Activated CD8-positive, alpha-beta memory T cell treated with anti-CD3 and anti-CD28 coated beads, Interleukin-2, amount 10 ng/mL, durations not matched to agents 7 days and 5 days (primary cell): ENCODE measurements at regions of chr2 and their contacts with region 1.

Region 1: DNA sequence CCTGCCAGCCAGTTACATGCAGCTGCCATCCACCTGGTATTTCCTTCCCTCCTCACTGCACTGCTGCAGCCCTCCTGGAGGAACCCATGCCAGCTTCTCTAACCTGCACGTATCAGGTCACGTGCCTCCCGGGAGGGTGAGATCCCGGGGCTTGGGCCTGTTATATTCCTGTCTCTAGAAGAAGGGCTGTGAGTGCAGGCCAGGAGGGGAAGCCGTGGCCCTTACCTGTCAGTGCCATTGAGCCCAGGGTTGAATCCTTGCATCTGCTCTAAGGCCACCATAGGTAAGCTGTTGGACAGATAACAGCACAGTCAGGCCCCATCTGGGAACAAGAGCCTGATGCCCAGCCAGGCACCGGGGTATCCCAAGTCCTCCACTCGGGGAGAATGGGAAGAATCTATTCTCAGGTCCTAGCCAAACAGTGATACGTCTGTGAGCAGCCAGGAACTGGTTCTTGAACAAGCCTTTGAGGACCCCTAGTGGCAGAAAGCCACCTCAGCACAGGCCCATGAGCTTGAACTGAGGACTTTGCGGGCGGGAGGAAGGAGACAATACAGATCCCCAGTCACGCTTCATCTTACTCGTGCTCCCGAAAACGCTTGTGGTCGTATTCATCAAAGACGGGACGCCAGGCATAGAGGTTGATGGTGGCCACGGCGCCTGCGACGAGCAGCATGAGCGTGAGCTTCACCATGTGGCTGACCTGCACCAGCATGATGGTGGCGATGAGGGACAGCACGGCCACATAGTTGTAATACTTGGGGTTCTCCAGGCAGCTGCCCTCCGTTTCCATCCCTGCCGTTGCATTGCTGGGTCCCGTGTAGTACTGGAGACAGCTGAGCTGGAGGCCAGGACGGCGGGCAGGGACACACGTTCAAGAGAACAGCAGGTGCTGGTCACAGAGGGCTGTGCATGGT is 34.4 kb downstream of the CENPO start:
- DNase-seq: peak; percentile 84
- ATAC-seq: peak; percentile 86
- H3K4me3 Mint-ChIP-seq: no peak overlapping the region
- H3K27ac Mint-ChIP-seq: peak overlapping the region; percentile 47
- H3K4me1 Mint-ChIP-seq: peaks cover 19% of the 10 kb centered on the region
- H3K27me3 Mint-ChIP-seq: no peaks in the 10 kb centered on the region

Region 2: DNA sequence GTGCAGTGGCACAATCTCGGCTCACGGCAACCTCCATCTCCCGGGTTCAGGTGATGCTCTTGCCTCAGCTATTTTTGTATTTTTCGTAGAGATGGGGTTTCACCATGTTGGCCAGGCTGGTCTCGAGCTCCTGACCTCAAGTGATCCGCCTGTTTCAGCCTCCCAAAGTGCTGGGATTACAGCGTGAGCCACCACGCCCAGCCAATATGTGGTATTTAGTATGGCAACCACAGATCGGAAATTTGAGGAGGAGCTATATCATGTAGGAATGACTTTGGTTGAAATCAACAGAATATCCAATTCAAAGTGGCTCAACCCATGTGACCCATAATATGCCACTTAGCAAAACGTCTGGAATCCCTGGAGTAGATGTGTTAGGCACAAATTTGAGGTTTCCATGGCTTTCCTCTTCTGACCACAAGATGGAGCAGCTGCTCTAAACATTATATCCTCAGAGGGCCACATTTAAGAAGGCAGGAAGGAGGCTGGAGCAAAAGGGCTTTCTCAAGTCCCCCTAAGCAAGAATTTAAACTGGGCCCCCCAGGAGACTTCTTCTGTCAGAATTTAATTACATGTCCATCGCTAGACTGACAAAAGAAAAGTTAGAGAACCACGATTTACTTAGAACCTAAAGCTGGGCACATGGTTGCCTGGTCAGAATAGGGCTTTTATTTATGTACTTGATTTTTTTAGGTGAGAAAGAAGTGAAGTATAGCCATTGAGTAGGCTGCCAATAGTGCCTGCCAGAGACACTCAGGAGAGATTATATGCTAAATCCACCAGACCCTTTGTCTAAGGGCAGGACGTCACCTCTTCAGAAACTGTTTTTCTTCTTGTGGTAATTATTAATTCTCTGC is 417.7 kb before region 1 on chr2:
- CTCF ChIA-PET with region 1: interaction called, 70 read pairs
- DNase-seq: peak; percentile 52
- ATAC-seq: peak; percentile 70
- H3K4me3 Mint-ChIP-seq: no peak overlapping the region
- H3K27ac Mint-ChIP-seq: no peak overlapping the region
- H3K4me1 Mint-ChIP-seq: peaks cover 3% of the 10 kb centered on the region
- H3K27me3 Mint-ChIP-seq: peaks cover 4% of the 10 kb centered on the region

Region 3: DNA sequence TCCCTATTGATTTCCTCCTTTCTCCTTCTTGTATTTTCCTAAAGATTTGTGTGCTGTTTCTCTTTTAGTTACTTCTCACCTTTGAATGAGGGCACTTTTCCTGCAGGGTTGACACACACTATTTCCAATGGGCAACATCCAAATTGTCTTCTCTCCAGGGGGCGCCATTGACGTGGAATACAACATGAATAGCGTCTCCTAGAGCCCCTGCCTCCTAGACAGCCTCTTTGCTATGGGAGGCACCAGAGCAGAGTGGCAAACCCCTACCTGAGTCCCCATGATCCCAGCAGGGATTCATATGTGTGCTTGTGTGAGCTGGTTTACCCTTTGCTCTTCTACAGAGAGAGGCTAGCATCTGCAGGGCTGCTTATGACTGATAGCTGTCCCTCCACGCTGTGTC is 405.9 kb before region 1 on chr2:
- CTCF ChIA-PET with region 1: interaction called, 32 read pairs
- DNase-seq: peak; percentile 68
- ATAC-seq: peak; percentile 42
- H3K4me3 Mint-ChIP-seq: no peak overlapping the region
- H3K27ac Mint-ChIP-seq: no peak overlapping the region
- H3K4me1 Mint-ChIP-seq: peaks cover 2% of the 10 kb centered on the region
- H3K27me3 Mint-ChIP-seq: peaks cover 3% of the 10 kb centered on the region

Region 4: GRCh38 chr2:24613154-24613814 is 214.3 kb before region 1 on chr2:
- CTCF ChIA-PET with region 1: interaction called, 18 read pairs
- DNase-seq: peak; percentile 70
- ATAC-seq: peak; percentile 97
- H3K4me3 Mint-ChIP-seq: no peak overlapping the region
- H3K27ac Mint-ChIP-seq: peak overlapping the region; percentile 85
- H3K4me1 Mint-ChIP-seq: peaks cover 13% of the 10 kb centered on the region
- H3K27me3 Mint-ChIP-seq: no peaks in the 10 kb centered on the region

Region 5: GRCh38 chr2:24711865-24712264 is 115.7 kb before region 1 on chr2:
- CTCF ChIA-PET with region 1: no interaction called
- DNase-seq: no peak
- ATAC-seq: no peak
- H3K4me3 Mint-ChIP-seq: no peak overlapping the region
- H3K27ac Mint-ChIP-seq: no peak overlapping the region
- H3K4me1 Mint-ChIP-seq: peaks cover 2% of the 10 kb centered on the region
- H3K27me3 Mint-ChIP-seq: no peaks in the 10 kb centered on the region

Region 6: DNA sequence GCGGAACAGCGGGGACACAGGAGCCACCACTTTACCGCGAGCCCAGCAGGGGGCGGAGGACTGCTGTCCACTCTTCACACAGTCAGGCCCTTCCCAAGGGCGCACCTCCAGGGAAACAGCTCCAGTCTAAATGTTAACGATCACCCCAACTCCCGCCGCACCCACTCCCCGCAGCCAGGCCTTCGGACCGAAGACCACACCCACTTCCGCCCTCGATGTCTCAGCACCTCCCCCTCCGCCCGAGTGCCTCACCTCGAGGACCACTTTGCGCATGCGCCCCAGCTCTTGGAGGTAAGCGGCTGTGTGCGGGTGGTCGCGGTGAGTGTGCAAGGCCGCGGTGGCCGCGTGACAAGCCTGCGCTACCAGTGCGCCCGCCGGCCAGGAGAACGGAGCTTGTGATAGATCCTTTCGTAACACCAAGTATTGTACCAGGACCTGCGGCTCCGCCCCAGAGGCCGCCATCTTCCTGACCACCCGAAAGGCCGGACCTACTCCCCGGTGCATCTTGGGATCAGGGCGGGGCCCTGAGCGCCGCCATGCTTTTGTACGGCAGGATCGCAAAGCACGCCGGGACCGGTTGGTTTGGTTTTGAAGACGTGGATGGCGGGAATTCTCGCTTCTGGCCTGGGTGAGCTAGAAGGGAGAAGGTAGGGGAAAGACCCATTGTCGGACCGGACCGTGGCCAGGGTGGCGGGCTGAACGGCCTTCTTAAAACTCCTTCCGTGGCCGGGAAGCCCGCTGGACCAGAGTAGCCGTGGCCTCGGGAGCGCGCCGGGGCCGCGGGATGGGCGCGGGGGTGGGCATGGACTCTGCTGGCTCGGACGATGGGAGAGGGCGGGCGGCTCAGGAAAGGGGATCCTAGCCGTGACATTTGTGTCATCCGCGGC is 34.5 kb before region 1 on chr2 and contains the starts of genes CENPO and PTRHD1:
- CTCF ChIA-PET with region 1: interaction called, 11 read pairs
- DNase-seq: peak; percentile 97
- ATAC-seq: peak; percentile 98
- H3K4me3 Mint-ChIP-seq: peak within 1 kb of the TSS; percentile 97
- H3K27ac Mint-ChIP-seq: peak within 1 kb of the TSS; percentile 99
- H3K4me1 Mint-ChIP-seq: peaks cover 53% of the 10 kb centered on the region
- H3K27me3 Mint-ChIP-seq: no peaks in the 10 kb centered on the region
- total RNA-seq, gene CENPO: 55.4 to 57.4 TPM
- total RNA-seq, gene PTRHD1: 17.9 to 29.3 TPM

Region 7: GRCh38 chr2:25131567-25132298 is 304.2 kb after region 1 on chr2:
- CTCF ChIA-PET with region 1: interaction called, 11 read pairs
- DNase-seq: no peak
- ATAC-seq: peak; percentile 23
- H3K4me3 Mint-ChIP-seq: no peak overlapping the region
- H3K27ac Mint-ChIP-seq: no peak overlapping the region
- H3K4me1 Mint-ChIP-seq: peaks cover 6% of the 10 kb centered on the region
- H3K27me3 Mint-ChIP-seq: peaks cover 67% of the 10 kb centered on the region